Stomach (tissue), 19 donors: ENCODE measurements at regions of chr1 and their contacts with region 1.

Region 1: GRCh38 chr1:66996018-66996682 is 57.8 kb downstream of the SLC35D1 start:
- DNase-seq: peak; percentile 78 to 91
- H3K4me3 ChIP-seq: no peak overlapping the region
- H3K27ac ChIP-seq: no peak overlapping the region
- H3K4me1 ChIP-seq: peaks cover 0 to 34% (median 13%) of the 10 kb centered on the region in 4 donors
- H3K27me3 ChIP-seq: no peaks in the 10 kb centered on the region
- CTCF ChIP-seq: peak in 5 of 7 experiments; percentile 55 to 94 (median 65)
- EP300 ChIP-seq: no peak
- POLR2A ChIP-seq: no peak

Region 2: DNA sequence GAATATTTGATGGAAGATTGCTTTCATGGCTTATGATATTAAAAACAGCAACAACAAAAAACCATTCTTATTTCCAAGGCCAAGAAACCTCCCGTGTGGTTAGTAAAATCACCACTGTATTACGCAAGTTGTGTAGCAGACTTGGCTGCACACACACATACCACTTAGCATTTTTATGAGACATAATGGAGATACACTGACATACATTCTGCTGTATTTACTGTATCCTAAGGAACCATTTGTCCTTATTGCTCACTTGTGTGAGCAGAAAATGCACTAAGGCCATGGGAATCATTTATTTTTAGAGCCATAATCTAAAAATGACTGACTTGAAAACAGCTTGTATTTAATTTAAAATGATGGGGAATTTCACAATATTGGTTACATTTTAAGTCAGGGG is 139.2 kb after region 1 on chr1:
- intact Hi-C with region 1: no loop called
- DNase-seq: peak in 1 of 2 donors; percentile 57
- H3K4me3 ChIP-seq: no peak overlapping the region
- H3K27ac ChIP-seq: no peak overlapping the region
- H3K4me1 ChIP-seq: peaks cover 23 to 54% (median 30%) of the 10 kb centered on the region in 4 donors
- H3K27me3 ChIP-seq: no peaks in the 10 kb centered on the region
- CTCF ChIP-seq: no peak
- EP300 ChIP-seq: no peak
- POLR2A ChIP-seq: no peak

Region 3: DNA sequence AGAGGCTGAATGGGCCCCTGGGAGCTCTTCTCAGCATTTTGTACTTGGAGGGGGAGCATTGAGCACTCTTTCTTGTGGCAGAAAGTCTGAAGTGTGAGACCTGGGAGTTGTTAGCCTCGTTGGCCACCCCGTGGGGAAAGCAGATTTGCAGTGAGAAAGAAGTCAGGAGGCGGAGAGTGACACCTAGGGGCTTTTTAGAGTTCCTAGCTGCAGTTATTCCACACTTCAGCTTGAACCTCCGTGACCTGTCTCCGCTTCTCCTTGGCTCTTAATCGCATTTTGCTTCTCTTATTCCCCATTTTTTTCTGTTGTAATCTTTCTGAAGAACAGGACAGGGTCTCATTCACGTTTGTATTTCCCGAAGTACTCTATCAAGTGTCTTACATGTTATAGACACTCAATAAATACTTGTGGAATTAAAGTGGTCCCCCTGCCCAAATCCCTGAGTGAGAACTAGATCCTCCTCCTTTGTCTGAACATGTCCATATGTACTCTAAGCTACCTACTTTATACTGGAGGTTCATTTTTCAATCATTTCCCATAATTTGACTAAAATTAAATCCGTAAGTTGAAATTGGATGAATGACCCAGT is 153.1 kb after region 1 on chr1:
- intact Hi-C with region 1: loop called (anchors 5 kb)
- DNase-seq: peak; percentile 71 to 93
- H3K4me3 ChIP-seq: no peak overlapping the region
- H3K27ac ChIP-seq: no peak overlapping the region
- H3K4me1 ChIP-seq: peaks cover 4 to 9% (median 6%) of the 10 kb centered on the region in 4 donors
- H3K27me3 ChIP-seq: no peaks in the 10 kb centered on the region
- CTCF ChIP-seq: peak in 5 of 7 experiments; percentile 62 to 96 (median 71)
- EP300 ChIP-seq: no peak
- POLR2A ChIP-seq: no peak

Region 4: DNA sequence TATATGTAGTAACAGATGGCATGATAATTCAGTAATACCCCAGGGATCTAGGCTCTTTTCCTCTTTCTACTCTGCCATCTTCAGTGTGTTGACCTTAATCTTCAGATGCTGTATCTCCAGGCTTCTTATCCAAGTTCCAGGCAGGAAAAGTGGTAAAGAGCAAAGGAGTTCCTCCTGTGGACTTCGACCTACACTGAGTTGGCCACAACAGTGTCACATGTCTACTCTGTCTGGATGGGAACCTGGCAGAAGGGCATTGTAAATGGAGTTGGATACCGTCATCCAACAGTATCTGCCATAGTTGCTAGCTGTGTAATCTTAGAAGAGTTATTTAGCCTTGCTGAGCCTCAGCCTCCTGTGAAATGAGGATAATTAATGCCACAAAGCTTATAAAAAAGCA is 192.0 kb after region 1 on chr1:
- intact Hi-C with region 1: no loop called
- DNase-seq: no peak
- H3K4me3 ChIP-seq: no peak overlapping the region
- H3K27ac ChIP-seq: no peak overlapping the region
- H3K4me1 ChIP-seq: no peaks in the 10 kb centered on the region
- H3K27me3 ChIP-seq: no peaks in the 10 kb centered on the region
- CTCF ChIP-seq: no peak
- EP300 ChIP-seq: no peak
- POLR2A ChIP-seq: no peak